Activated T-helper 1 cell treated with anti-CD3 and anti-CD28 coated beads, Interleukin-12 subunit alpha, Interleukin-12 subunit beta, Interleukin-2, Interleukin-4 antibody, amounts not matched to agents 30 ng/mL and 10 ng/mL and 1 ng/mL, durations not matched to agents 14 hours and 24 hours and 36 hours (primary cell): ENCODE measurements at regions of chr2 and their contacts with region 1.

Region 1: GRCh38 chr2:176653479-176654443 is 384.5 kb downstream of the MTX2 start:
- DNase-seq: no peak
- H3K4me3 Mint-ChIP-seq: no peak overlapping the region
- H3K27ac Mint-ChIP-seq: no peak overlapping the region
- H3K4me1 Mint-ChIP-seq: peaks cover 18% of the 10 kb centered on the region
- H3K27me3 Mint-ChIP-seq: peaks cover 45% of the 10 kb centered on the region

Region 2: DNA sequence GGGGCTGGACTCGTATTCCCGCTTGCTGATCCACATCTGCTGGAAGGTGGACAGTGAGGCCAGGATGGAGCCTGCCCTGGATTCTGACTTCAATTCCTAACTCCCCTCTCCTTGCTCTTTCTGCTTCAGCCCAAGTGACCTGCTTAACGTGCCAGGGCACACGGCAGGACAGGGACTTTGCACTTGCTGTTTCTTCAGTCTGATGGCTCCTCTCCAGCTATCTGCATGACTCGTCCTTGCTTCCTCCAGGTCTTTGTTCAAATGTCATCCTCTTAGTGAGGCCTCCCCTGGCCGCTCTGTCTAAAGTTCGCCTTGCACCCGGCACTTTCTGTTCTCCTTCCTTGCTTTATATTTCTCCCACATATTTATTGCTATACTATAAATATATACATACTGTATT is 27.0 kb before region 1 on chr2:
- intact Hi-C with region 1: no loop called
- DNase-seq: no peak
- H3K4me3 Mint-ChIP-seq: no peak overlapping the region
- H3K27ac Mint-ChIP-seq: no peak overlapping the region
- H3K4me1 Mint-ChIP-seq: no peaks in the 10 kb centered on the region
- H3K27me3 Mint-ChIP-seq: peaks cover 39% of the 10 kb centered on the region

Region 3: DNA sequence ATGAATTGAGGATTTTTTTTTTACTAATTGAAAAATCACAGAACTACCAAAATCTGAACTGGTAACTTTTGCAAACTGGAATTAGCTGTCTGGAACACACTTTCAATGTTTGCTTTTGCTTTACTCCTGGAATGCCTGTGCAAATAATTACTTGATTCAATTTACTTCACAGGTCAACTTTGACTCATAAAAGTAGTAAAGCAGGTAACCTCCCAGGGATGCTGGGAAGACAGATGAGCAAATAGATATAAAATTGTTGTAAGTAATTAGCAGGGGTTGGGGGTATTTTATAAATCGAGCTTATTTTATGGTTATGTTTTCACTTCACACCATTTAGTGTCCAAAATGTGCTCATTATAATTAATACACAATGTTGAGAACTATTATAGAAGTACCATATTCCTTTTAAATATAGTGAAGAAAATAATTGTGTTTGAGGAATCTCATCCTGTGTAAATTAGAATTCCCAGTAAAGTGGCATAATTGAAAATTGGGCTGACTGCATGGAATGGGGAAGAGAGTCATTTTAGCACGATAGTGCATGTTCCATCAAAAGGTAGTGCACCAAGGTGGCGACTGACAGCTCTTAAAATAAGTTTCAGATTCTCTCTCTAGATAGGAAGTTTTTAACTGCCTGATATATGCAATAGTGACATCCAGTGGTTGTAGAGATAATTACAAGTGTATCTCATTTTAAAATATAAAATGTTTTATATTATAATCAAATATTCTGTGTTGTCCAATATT is 160.7 kb after region 1 on chr2:
- intact Hi-C with region 1: loop called (anchors 5 kb)
- DNase-seq: no peak
- H3K4me3 Mint-ChIP-seq: no peak overlapping the region
- H3K27ac Mint-ChIP-seq: no peak overlapping the region
- H3K4me1 Mint-ChIP-seq: peaks cover 5% of the 10 kb centered on the region
- H3K27me3 Mint-ChIP-seq: peaks cover 2% of the 10 kb centered on the region

Region 4: GRCh38 chr2:176997074-176997791 is 343.5 kb after region 1 on chr2:
- intact Hi-C with region 1: no loop called
- DNase-seq: peak; percentile 2
- H3K4me3 Mint-ChIP-seq: no peak overlapping the region
- H3K27ac Mint-ChIP-seq: peak overlapping the region; percentile 82
- H3K4me1 Mint-ChIP-seq: peaks cover 29% of the 10 kb centered on the region
- H3K27me3 Mint-ChIP-seq: peaks cover 12% of the 10 kb centered on the region